Sigmoid colon (tissue), 7 donors: ENCODE measurements at regions of chr11 and their contacts with region 1.

Region 1: DNA sequence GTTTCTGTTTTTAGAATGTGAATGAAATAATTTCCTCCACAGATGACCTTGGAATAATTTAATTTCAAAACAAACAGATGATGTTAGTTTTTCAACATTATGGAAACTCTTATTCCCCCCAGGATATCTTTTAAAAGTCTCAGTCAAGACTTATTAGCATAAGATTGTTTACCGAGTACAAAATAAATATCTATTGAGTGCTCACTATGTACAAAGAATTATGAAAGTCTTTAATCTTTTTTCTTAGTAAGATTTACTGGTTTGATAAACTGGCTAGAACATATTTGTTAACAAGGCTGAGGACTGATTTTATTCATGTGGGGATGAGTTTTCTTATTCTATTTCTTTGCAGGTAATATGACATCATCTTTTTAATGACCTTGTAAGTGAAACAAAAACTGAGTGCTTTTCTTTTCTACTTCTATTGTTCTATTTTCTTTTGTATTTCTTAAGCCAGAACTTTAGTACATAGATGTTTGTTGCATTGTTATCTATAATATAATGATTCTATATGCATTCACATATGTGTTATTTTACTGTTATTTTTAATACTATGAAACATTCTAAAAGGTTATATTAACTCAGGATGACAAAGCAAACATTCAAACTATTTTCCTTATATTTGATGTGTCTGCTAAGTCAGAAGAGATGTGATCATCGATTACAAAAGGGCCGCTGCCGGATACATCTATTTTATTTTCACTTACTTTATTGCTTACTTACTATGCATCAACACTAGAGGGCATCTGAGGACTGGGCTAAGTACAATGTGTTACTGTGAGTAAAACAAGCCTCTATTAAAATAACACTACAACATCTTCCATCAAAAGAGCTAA is 111.0 kb upstream of the ARHGAP42 start:
- DNase-seq: no peak
- H3K4me3 ChIP-seq: no peak overlapping the region
- H3K27ac ChIP-seq: no peak overlapping the region
- H3K4me1 ChIP-seq: peaks cover 0 to 7% (median 0%) of the 10 kb centered on the region in 4 donors
- H3K27me3 ChIP-seq: no peaks in the 10 kb centered on the region
- CTCF ChIP-seq: peak; percentile 57 to 75 (median 72)
- EP300 ChIP-seq: no peak
- POLR2A ChIP-seq: no peak

Region 2: DNA sequence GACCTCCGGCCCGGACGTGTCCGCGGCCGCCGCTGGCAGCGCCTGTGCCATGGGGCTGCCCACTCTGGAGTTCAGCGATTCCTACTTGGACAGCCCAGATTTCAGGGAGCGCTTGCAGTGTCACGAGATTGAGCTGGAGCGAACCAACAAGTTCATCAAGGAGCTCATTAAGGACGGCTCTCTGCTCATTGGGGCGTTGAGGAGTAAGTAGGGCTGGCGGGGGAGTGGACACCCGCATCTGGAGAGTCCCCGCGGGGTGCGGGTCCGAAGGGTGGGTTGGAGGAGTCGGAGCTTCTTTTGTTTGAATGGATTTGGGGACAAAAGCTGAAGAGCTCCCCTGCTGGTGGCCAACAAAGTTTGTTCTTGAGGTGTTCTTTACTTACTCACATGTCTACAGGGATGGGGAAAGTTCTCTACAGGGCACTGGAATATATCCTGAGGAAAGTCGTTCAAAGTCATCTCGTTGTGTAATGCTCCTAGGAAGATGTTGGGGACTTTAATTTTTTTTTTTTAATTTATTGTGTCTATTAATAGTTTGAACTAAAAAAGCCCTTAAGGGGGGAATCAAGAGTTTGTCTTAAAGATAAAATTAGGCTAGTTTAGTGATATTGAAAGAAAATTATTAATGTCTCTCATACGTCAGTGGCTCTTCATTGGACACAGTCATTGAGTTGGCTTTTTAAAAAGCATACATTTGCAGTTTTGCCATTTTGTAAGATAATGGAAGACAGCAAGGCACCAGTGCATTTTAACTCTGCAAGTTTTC is 111.7 kb after region 1 on chr11:
- intact Hi-C with region 1: loop called (anchors 5 kb)
- DNase-seq: peak; percentile 72
- H3K4me3 ChIP-seq: peak overlapping the region; percentile 64 to 76 (median 76)
- H3K27ac ChIP-seq: peak overlapping the region; percentile 73 to 81 (median 79)
- H3K4me1 ChIP-seq: peaks cover 0 to 41% (median 16%) of the 10 kb centered on the region in 4 donors
- H3K27me3 ChIP-seq: no peaks in the 10 kb centered on the region
- CTCF ChIP-seq: peak in 3 of 4 experiments; percentile 55 to 65 (median 57)
- EP300 ChIP-seq: no peak
- POLR2A ChIP-seq: no peak

Region 3: DNA sequence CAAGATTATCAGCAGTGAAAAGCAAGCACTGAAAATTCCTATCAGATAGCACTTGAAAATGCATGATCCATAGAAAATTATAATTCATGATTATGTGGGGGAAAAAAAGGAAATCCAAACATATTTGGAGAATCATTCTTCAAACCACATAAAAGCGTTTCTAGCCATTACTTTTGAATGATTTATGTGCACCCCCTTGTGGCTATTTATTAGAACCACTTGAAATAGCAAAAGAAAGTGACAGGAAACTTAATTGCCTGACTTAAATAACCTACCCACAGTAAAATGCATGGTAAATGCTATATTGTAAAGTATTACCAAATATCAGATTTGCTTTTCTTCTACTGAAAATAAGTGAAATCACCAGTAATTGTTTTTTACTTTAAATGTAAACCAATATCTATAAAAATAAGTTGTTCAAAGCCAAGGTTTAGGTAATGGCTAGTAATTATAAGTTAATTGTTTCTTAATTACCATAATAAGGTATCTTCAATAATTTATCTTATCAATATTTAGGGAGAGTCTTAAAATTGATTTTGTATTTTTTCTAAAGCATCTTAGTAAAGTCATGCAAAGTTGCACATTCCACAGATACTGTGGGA is 279.5 kb after region 1 on chr11:
- intact Hi-C with region 1: loop called (anchors 5 kb)
- DNase-seq: no peak
- H3K4me3 ChIP-seq: no peak overlapping the region
- H3K27ac ChIP-seq: no peak overlapping the region
- H3K4me1 ChIP-seq: no peaks in the 10 kb centered on the region
- H3K27me3 ChIP-seq: no peaks in the 10 kb centered on the region
- CTCF ChIP-seq: peak in 3 of 4 experiments; percentile 37 to 46 (median 46)
- EP300 ChIP-seq: no peak
- POLR2A ChIP-seq: no peak

Region 4: GRCh38 chr11:100930185-100930778 is 354.2 kb after region 1 on chr11:
- intact Hi-C with region 1: loop called (anchors 1 kb)
- DNase-seq: no peak
- H3K4me3 ChIP-seq: no peak overlapping the region
- H3K27ac ChIP-seq: no peak overlapping the region
- H3K4me1 ChIP-seq: peaks cover 0 to 7% (median 0%) of the 10 kb centered on the region in 4 donors
- H3K27me3 ChIP-seq: no peaks in the 10 kb centered on the region
- CTCF ChIP-seq: peak; percentile 32 to 61 (median 48)
- EP300 ChIP-seq: no peak
- POLR2A ChIP-seq: no peak